SK-N-SH (cell line): ENCODE measurements at regions of chr22 and their contacts with region 1.

Region 1: DNA sequence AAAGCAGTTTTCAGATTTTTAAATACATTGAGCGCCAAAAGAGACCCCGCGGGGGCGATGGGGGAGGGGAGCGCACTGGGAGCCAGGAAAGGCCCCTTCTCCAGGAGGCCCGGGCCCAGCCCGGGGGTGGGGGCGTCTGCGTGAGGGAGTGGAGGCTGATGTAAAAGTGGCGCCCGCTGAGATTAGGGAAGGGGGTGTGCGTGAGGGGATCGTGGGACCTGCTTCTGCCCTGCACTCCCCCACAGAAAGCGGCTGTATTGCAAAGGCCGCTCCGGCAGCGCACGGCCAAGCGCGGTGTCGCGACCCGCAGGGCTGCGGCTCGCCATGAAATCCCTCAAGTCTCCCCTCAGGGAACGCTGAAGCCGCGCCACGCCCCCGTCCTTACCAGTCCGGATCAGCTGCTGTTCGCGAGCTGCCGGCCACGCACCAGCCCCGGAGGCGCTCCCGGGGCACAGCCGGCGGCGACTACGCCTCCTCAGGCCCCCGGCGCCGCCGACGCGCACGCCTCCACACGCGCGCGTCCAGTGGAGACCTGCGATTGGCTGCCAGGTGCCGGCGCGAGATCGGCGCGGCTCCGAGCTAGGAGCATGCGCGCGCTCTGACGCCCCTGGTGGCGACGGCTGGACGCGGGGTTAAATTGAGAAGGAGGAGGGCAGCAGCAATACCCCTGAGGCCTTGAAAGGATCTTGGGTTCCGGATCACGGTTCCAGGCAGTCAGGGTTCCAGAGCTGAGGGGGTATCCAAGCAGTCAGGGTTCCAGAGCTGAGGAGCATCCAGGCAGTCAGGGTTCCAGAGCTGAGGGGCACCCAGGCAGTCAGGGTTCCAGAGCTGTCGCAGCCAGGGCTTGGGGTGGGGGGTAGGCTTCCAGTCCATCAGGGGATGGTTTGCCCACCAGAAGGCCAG is at the start of gene ZNF280B:
- DNase-seq: peak; percentile 94
- H3K4me3 ChIP-seq: peak within 1 kb of the TSS; percentile 76 to 82
- H3K27ac ChIP-seq: peak within 1 kb of the TSS in 1 of 2 experiments; percentile 64; a peak in 2 of 4 replicates
- H3K4me1 ChIP-seq: peaks cover 0 to 2% of the 10 kb centered on the region in 2 experiments; a peak in 1 of 4 replicates
- H3K27me3 ChIP-seq: no peaks in the 10 kb centered on the region
- CTCF ChIP-seq: peak; percentile 75
- EP300 ChIP-seq: no peak
- RAD21 ChIP-seq: no peak
- polyA plus RNA-seq, gene ZNF280B: 0.82 and 1.2 TPM in 2 replicates

Region 2: DNA sequence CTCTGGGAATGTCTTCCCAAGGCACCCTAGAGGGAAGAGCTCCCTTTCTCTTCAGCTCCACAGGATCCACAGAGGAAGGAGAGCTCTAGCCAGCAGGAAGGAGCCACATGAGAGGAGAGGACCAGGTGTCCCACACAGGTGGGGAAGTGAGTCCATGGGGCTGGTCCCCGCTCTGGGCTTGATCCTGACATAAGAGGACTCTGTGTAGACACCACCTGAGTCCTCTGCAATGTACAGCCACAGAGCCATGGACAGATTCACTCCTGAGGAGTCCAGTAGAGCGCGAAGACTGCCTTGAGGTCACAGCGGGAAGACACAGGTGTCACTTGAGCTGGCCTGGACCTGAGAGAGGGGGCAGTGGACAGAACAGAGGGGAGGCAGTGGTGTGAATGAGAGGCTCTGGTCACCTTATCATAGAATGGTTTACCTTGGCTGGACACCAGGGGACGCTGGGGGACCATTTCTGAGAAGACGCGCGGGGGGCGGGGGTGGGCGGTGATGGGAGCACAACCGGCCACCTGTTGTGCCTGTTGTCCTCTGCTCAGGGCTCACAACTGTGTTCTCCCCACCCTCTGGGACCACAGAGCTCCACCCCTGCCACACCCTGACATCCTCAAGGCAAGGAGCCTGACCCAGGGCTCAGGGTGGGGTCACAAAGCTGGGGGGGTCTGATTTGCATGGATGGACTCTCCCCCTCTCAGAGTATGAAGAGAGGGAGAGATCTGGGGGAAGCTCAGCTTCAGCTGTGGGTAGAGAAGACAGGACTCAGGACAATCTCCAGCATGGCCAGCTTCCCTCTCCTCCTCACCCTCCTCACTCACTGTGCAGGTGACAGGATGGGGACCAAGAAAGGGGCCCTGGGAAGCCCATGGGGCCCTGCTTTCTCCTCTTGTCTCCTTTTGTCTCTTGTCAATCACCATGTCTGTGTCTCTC is 128.2 kb before region 1 on chr22:
- CTCF ChIA-PET with region 1: no interaction called
- POLR2A ChIA-PET with region 1: no interaction called
- DNase-seq: peak; percentile 35
- H3K4me3 ChIP-seq: no peak overlapping the region
- H3K27ac ChIP-seq: no peak overlapping the region
- H3K4me1 ChIP-seq: no peaks in the 10 kb centered on the region
- H3K27me3 ChIP-seq: peaks cover 4% of the 10 kb centered on the region
- CTCF ChIP-seq: peak; percentile 18; the same call in 1 of the 2 replicates
- EP300 ChIP-seq: no peak
- RAD21 ChIP-seq: no peak

Region 3: DNA sequence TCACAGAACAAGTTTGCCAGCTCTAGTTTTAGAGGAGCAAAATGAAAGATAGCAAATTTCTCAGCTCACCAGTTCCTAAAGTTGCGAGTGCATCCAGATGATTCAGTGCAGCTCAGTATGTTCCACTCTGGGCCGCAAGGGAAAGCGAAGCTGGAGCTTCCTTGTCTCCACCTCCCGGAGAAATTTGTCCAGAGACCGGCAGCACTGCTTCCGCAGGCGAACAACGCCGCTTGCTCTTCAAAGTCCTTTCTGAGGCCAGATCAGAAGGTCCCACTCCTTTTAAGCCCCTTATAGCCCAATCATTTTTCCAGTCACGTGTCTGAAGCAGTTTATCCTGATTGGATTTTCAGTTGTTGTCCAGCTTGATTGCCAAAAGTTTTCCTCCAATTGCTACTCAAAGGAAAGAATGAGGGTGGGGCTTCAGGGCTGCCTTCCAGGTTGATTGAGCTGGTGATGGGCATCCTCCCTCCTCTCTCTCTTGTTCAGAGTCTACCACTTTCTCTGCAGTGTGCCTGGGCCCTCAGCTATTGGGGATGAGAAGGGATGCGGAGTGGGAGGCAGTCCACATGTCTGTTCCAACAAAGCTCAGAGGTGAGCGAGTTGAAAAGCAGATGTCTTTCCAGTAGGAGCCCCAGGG is 11.6 kb after region 1 on chr22 and contains the start of gene ZNF280A:
- CTCF ChIA-PET with region 1: interaction called, 21 read pairs
- POLR2A ChIA-PET with region 1: no interaction called
- DNase-seq: no peak
- H3K4me3 ChIP-seq: no peak within 1 kb of the TSS
- H3K27ac ChIP-seq: no peak within 1 kb of the TSS
- H3K4me1 ChIP-seq: no peaks in the 10 kb centered on the region
- H3K27me3 ChIP-seq: peaks cover 7% of the 10 kb centered on the region
- CTCF ChIP-seq: no peak
- EP300 ChIP-seq: no peak
- RAD21 ChIP-seq: no peak
- polyA plus RNA-seq, gene ZNF280A: not detected in 2 replicates

Region 4: DNA sequence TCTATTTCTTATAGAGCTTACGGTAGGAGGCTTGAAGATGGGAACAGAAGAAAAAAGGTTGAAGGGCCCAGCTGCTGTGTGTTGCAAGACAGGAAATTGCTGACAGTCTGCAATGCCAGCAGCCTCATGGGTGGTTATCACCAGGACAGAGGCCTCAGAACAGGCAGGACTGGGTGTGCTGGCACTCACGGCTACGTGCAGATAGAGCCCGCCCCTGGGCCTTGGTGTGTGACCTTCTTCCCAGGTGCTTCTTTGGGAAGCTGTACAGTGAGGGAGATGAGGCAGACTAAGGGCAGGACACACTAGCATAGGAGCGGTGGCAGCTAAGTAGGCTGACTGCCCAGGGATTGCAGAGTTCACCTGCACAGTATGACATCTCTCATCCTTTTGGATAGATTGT is 38.0 kb after region 1 on chr22:
- CTCF ChIA-PET with region 1: interaction called, 15 read pairs
- POLR2A ChIA-PET with region 1: no interaction called
- DNase-seq: no peak
- H3K4me3 ChIP-seq: no peak overlapping the region
- H3K27ac ChIP-seq: no peak overlapping the region
- H3K4me1 ChIP-seq: peaks cover 0 to 10% of the 10 kb centered on the region in 2 experiments; a peak in 1 of 4 replicates
- H3K27me3 ChIP-seq: no peaks in the 10 kb centered on the region
- CTCF ChIP-seq: no peak
- EP300 ChIP-seq: no peak
- RAD21 ChIP-seq: no peak

Region 5: DNA sequence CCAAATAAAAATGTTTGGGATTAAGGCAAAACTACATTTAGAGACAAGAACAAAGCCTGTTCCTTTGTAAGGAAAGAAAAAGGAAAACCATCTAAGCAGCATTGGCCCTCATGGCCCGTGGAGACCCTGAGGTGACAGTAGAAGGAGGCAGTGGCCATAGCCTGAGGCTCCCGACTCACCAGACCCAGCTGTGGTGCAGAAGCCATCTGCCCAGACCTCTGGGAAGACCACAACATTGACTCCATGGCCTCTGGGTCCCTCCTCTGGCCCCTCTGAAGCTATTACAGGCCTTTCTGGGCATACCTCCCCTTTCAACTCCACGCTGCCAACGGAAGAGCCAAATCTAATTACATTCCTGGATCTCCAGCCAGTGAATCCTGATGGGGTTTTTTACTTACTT is 44.1 kb after region 1 on chr22:
- CTCF ChIA-PET with region 1: interaction called, 15 read pairs
- POLR2A ChIA-PET with region 1: interaction called, 3 read pairs
- DNase-seq: peak; percentile 80
- H3K4me3 ChIP-seq: peak overlapping the region in 1 of 2 experiments; percentile 13; a peak in 1 of 4 replicates
- H3K27ac ChIP-seq: peak overlapping the region in 1 of 2 experiments; percentile 63; a peak in 2 of 4 replicates
- H3K4me1 ChIP-seq: peaks cover 0 to 54% of the 10 kb centered on the region in 2 experiments; a peak in 3 of 4 replicates
- H3K27me3 ChIP-seq: no peaks in the 10 kb centered on the region
- CTCF ChIP-seq: peak; percentile 26
- EP300 ChIP-seq: no peak
- RAD21 ChIP-seq: peak; percentile 75